Psoas muscle (tissue), 8 donors: ENCODE measurements at regions of chr3 and their contacts with region 1.

Region 1: GRCh38 chr3:169668957-169669681 is 5.6 kb upstream of the MECOM start:
- DNase-seq: peak; percentile 72 to 82
- ATAC-seq: peak; percentile 88 to 96 (median 92)
- H3K4me3 ChIP-seq: peak overlapping the region; percentile 54
- H3K27ac ChIP-seq: peak overlapping the region; percentile 21
- H3K4me1 ChIP-seq: peaks cover 10% of the 10 kb centered on the region
- H3K27me3 ChIP-seq: peaks cover 3 to 99% (median 22%) of the 10 kb centered on the region in 3 donors
- CTCF ChIP-seq: peak; percentile 65

Region 2: DNA sequence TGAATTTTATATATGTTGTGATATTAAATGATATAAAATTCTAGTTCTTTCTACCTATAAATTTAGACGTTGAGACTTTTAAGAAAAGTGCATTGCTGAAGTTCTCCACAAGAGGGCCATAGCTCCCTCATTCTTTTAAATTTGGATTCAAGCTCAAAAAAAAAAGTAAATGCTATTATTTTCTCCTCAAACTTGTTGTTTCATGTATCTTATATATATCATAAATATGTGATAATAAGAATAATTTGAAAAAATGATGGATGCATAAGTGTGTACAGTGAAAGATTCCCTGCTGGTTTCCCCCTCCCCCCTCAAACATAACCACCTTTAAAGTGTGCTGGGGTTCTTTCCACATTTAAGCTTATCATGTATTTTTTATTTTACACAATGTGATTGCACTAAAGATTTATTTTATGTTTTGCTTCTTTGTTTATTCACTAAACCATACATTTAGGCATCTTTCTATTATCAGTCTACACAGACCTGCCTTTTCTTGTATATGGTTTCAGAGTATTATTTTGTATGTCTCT is 804.0 kb before region 1 on chr3:
- intact Hi-C with region 1: loop called in 1 of 2 experiments (anchors 10 kb)
- DNase-seq: no peak
- ATAC-seq: no peak
- H3K4me3 ChIP-seq: peak overlapping the region; percentile 13
- H3K27ac ChIP-seq: no peak overlapping the region
- H3K4me1 ChIP-seq: no peaks in the 10 kb centered on the region
- H3K27me3 ChIP-seq: no peaks in the 10 kb centered on the region
- CTCF ChIP-seq: peak; percentile 61

Region 3: GRCh38 chr3:168952551-168952950 is 716.6 kb before region 1 on chr3:
- intact Hi-C with region 1: loop called in 1 of 2 experiments (anchors 10 kb)
- DNase-seq: no peak
- ATAC-seq: no peak
- H3K4me3 ChIP-seq: no peak overlapping the region
- H3K27ac ChIP-seq: no peak overlapping the region
- H3K4me1 ChIP-seq: no peaks in the 10 kb centered on the region
- H3K27me3 ChIP-seq: no peaks in the 10 kb centered on the region
- CTCF ChIP-seq: no peak

Region 4: GRCh38 chr3:169041677-169042171 is 627.4 kb before region 1 on chr3:
- intact Hi-C with region 1: loop called in 1 of 2 experiments (anchors 10 kb)
- DNase-seq: no peak
- ATAC-seq: peak in 1 of 4 donors; percentile 75
- H3K4me3 ChIP-seq: no peak overlapping the region
- H3K27ac ChIP-seq: no peak overlapping the region
- H3K4me1 ChIP-seq: no peaks in the 10 kb centered on the region
- H3K27me3 ChIP-seq: no peaks in the 10 kb centered on the region
- CTCF ChIP-seq: peak; percentile 44

Region 5: GRCh38 chr3:169149349-169149890 is 519.7 kb before region 1 on chr3:
- intact Hi-C with region 1: loop called (anchors 2 to 5 kb)
- DNase-seq: peak; percentile 72 to 83
- ATAC-seq: peak; percentile 89 to 95 (median 92)
- H3K4me3 ChIP-seq: peak overlapping the region; percentile 38
- H3K27ac ChIP-seq: peak overlapping the region; percentile 11
- H3K4me1 ChIP-seq: peaks cover 6% of the 10 kb centered on the region
- H3K27me3 ChIP-seq: peaks cover 12 to 52% (median 13%) of the 10 kb centered on the region in 3 donors
- CTCF ChIP-seq: peak; percentile 83